ENCODE measurements at regions of chr17 and their contacts with region 1.

Region 1: DNA sequence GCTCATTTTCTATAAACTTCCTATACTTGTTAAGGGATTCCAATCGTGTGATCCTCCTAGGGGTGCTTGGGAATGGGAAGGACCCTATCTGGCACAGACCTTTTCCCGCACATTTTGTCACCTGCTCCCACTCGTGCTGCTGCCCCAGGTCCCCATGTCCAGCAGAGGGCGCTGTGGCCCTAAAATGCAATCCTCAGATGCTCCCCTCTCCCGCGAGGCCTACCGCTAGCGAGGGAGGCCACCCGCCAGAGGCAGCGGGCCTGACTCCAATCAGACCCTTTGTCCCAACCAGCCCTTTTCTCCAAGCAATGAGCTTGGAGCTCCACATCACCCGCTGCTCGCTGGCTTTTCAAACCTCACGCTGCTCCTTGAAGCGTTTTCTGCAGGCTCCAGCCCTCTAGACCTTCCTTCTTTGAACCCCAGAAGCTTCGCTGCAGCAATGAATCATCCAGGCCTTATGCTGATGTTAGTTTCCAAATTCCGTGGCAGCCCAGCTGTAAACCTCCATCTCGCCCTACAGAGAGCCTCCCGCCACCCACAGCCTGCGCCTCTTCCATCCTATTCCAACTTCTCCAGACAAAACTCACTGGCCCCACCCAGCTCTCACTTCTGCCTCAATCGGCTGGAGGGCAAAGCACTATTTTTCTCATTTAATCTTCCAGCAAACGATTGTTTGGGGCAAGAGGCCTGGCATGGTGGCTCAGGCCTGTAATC is 23.6 kb upstream of the FZD2 start:
- DNase-seq: peak; percentile 95
- ATAC-seq: peak; percentile 97
- H3K4me3 Mint-ChIP-seq: no peak overlapping the region
- H3K27ac Mint-ChIP-seq: peak overlapping the region; percentile 33
- H3K4me1 Mint-ChIP-seq: peaks cover 8% of the 10 kb centered on the region
- H3K27me3 Mint-ChIP-seq: no peaks in the 10 kb centered on the region

Region 2: DNA sequence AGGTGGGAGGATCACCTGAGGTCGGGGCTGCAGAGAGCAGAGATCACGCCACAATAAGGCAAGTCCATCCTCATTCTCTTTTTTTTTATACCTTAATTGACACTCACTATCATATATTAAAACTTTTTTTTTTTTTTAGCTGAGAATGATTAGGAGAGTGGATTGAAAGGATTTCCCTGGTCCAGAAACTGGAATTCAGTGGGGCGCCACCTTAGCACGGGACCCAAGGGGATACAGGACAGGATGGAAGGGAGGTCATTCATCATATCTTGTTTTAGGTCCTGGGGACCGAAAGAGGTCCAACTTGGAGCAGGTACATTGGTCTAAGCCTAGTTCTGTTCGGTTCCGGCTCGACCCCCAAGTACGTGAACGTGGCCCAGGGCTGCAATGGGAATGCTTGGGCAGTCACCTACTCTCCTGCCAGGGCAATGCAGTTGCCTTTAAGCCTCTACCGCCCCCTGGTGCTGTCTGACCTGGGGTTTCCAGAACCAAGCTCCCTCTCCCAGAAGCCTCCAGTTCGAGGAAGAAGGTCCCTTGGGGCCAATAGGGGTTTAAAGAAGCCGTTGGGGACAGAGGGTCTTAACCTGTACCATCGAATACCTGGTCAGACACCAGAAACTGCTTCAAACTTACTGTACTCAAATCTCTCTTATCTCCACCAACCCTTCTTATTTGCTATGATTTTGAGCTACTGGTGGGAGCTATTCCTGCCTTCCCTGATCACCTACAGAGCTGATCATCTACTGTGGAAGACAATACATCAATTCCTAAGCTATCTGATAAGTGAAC is 10.6 kb before region 1 on chr17:
- CTCF ChIA-PET with region 1: interaction called, 30 read pairs
- POLR2A ChIA-PET with region 1: no interaction called
- intact Hi-C with region 1: no loop called
- DNase-seq: peak; percentile 87
- ATAC-seq: peak; percentile 81
- H3K4me3 Mint-ChIP-seq: no peak overlapping the region
- H3K27ac Mint-ChIP-seq: no peak overlapping the region
- H3K4me1 Mint-ChIP-seq: no peaks in the 10 kb centered on the region
- H3K27me3 Mint-ChIP-seq: peaks cover 9% of the 10 kb centered on the region

Region 3: DNA sequence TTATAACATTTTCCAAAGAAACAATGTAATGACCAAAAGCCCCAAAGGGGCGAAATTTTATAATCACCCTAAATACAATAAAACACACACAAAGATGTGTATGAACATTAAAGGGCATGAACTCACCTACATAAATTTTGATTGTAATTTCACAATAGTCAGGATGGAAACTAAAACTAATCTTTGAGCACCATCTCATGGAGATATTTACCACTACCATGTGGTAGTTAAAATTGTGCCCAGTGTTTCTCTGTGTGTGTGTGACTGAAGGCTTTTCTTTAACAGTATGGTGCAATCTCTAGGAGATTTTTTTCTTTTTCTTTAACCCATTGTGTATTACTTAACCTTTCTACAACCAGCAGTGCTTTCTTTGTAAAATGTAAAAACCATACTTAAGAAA is 102.9 kb after region 1 on chr17:
- CTCF ChIA-PET with region 1: interaction called, 16 read pairs
- POLR2A ChIA-PET with region 1: no interaction called
- intact Hi-C with region 1: loop called (anchors 1 to 5 kb)
- DNase-seq: no peak
- ATAC-seq: no peak
- H3K4me3 Mint-ChIP-seq: no peak overlapping the region
- H3K27ac Mint-ChIP-seq: no peak overlapping the region
- H3K4me1 Mint-ChIP-seq: no peaks in the 10 kb centered on the region
- H3K27me3 Mint-ChIP-seq: peaks cover 5% of the 10 kb centered on the region

Region 4: DNA sequence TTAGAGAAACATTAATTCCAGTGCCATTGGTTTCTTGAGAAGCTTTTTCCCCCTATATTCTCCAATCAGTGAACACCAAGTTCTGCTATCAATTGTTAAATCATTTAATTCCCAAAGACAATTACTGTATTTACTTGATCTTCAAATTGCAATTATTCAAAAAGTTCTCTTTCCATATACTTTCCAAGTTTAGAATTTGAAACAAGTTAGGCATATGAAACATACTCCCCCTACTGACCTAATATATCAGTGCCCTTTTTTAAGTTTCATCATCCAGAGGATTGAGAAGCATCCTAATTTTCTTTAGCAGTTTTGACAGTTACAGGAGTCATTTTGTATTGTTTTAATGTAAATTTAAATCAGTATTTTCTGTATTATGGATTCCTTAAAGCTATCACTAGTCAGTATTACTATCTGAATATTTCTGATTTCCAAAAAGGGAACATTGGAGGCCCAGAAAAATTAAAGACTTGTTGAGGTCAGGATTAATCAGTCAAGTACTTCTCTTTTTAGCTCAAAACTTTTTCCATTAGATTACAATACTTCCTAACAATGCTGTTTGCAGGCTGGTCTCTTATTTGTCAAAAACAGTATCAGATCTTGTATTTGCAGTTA is 138.9 kb after region 1 on chr17:
- CTCF ChIA-PET with region 1: interaction called, 7 read pairs
- POLR2A ChIA-PET with region 1: no interaction called
- intact Hi-C with region 1: loop called (anchors 1 kb)
- DNase-seq: no peak
- ATAC-seq: no peak
- H3K4me3 Mint-ChIP-seq: no peak overlapping the region
- H3K27ac Mint-ChIP-seq: no peak overlapping the region
- H3K4me1 Mint-ChIP-seq: peaks cover 2% of the 10 kb centered on the region
- H3K27me3 Mint-ChIP-seq: no peaks in the 10 kb centered on the region

Region 5: DNA sequence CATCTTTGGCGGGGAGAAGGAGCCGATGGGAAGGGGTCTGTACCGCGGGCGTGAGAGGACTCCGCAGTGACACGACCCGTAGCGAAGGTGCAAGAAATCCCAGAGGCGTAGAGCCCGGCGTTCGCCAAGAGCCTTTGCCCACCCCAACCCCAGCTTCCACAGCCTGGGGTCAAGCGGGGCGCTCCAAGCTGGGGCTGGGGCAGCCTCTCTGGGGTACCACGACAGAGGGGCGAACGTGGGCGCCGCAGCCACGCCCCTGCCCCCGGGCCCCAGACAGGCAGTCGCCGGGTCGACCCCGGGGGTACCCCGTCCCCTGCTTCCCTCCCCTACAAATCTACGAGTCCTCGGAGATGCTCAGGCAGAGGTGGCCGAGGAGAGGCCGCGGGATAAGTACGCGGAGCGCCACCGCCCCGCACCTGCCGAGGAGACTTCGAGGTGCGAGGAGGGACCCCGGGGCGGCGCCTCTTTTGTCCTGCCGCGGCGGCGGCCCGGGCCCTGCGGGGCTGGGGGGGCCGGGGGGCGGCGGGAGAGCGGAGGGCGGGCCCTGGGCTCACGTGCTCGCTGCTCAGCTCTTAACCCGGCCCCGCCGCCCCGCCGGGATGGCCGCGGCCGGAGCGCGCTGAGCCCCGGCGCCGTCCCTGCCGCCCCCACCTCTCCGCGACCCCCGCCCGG is 224.9 kb after region 1 on chr17 and contains the start of gene ADAM11:
- CTCF ChIA-PET with region 1: no interaction called
- POLR2A ChIA-PET with region 1: no interaction called
- intact Hi-C with region 1: loop called in 1 of 2 experiments (anchors 5 kb)
- DNase-seq: no peak
- ATAC-seq: peak; percentile 17
- H3K4me3 Mint-ChIP-seq: no peak within 1 kb of the TSS
- H3K27ac Mint-ChIP-seq: no peak within 1 kb of the TSS
- H3K4me1 Mint-ChIP-seq: no peaks in the 10 kb centered on the region
- H3K27me3 Mint-ChIP-seq: peaks cover 27% of the 10 kb centered on the region
- total RNA-seq, gene ADAM11: 0.19 to 0.55 TPM

Region 6: DNA sequence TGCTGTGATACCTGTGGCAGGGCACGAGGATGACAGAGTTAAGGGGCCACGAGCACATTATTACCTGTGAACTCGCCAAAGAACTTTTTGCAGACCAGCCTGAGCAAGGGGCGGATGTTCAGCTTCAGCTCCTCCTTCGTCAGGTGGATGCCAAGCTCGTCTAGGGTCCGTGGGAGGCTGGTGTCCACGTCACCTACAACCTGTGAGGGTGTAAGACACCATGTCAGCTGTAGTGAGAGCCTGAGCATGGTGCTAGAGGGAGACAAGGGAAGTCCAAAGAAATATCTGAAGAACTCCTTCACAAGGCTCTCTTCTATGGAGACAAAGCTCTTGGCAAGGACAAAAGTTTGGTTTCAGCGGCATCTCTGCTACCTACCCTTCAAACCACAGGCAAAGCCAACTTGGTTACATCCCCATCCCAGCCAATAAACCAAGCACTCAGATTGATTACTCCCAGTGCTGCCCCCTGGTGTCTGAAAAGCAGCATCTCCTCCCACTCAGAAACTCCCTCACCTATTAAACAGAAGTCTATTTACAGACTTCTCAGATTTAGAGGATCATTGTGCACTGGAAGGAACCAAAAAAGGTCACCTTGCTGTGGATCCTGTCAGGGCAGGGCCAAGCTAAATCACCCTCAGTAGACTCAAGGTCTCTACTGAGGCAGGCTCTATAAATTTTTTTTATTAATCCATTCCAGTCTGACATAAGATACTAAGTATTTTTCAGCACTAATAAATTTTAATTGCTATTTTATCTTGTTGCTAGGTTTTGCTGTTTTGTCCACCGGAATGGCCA is 331.4 kb after region 1 on chr17:
- CTCF ChIA-PET with region 1: interaction called, 3 read pairs
- POLR2A ChIA-PET with region 1: no interaction called
- intact Hi-C with region 1: loop called (anchors 1 to 5 kb)
- DNase-seq: peak; percentile 79
- ATAC-seq: peak; percentile 84
- H3K4me3 Mint-ChIP-seq: no peak overlapping the region
- H3K27ac Mint-ChIP-seq: no peak overlapping the region
- H3K4me1 Mint-ChIP-seq: no peaks in the 10 kb centered on the region
- H3K27me3 Mint-ChIP-seq: no peaks in the 10 kb centered on the region